ENCODE measurements at regions of chr17 and their contacts with region 1.

Region 1: DNA sequence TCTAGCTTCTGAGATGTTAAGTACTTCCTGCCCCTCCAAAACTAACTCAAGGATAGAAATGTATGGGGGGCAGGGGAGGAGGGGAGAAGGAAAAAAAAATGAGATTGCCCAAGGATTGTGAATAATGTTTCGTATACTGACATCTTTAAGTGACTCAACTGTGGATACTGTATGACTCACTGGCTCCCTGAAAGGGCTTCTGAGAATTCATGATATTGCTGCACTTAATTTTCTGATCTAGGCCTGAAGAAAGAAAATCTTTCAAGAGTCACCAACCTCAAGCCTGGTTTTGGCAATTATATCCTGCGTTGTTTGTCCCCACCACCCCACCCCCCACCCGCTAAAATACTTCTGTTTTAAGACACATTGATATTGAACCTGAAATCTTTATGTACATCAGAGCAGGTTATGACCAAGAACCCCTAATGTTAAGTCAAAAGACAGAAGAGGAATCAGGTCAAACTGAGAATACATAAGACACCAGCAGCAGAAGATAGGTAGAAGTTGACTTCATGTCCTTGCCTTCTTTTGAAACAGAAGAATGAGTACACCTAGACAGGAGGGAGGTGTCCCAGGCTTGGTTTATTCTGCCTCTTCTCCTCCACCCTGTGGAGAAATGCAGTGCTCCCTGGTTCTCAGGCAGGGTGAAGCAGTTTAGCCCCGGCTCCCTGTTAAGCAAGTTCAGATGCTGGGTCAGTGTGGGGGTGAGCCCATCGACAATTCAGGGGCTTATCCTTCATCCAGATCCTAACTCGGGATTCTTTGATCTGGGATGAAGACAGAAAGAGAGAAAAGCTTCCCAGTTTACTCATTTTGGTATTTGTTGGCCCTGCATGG is 3.3 kb upstream of the FBXL20 start:
- DNase-seq: peak; percentile 29
- H3K4me3 ChIP-seq: no peak overlapping the region
- CTCF ChIP-seq: no peak

Region 2: GRCh38 chr17:39461113-39461925 is 56.6 kb after region 1 on chr17 and contains the start of gene CDK12:
- in situ Hi-C with region 1: loop called (anchors 5 kb)
- DNase-seq: peak; percentile 98
- H3K4me3 ChIP-seq: peak within 1 kb of the TSS; percentile 98
- CTCF ChIP-seq: no peak

Region 3: DNA sequence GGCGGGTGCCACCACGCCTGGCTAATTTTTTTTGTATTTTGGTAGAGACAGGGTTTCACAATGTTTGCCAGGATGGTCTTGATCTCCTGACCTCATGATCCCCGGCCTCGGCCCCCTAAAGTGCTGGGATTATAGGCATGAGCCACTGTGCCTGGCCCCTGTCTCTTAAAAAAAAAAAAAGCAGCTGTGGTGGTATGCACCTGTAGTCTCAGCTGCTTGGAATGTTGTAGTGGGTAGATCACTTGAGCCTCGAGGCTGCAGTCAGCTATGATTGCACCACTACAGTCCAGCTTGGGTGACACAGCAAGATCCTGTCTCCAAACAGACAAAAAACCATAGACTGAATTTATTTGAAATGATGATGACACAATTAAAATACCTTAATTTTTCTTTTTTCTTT is 80.8 kb after region 1 on chr17:
- in situ Hi-C with region 1: loop called (anchors 5 kb)
- DNase-seq: peak; percentile 54
- H3K4me3 ChIP-seq: no peak overlapping the region
- CTCF ChIP-seq: no peak

Measured in astrocyte of the cerebellum (primary cell).